HEK293 (cell line): ENCODE measurements at regions of chr2 and their contacts with region 1.

Region 1: DNA sequence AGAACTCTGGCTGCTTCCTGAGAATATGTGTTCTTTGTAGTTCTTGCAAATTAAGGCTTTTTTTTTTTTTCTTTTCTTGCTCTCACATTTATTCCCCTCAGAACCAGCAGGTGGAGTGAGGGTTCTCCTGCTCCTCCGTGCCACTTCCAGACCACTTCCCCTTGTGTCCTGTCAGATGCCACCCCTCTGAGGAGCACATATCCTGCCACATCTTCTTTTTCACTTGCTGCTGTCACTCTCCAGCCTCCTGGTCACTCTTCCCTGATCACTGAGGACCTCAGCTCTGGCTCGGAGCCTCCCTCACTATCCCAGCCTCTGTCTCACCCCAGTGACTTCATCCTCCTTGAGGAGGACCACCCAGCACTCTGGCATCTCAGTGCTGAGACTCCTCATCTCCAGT is 100.5 kb downstream of the TACR1 start:
- H3K4me3 ChIP-seq: no peak overlapping the region
- H3K27ac ChIP-seq: no peak overlapping the region
- H3K4me1 ChIP-seq: peaks cover 5% of the 10 kb centered on the region
- CTCF ChIP-seq: peak; percentile 38; the same call in 1 of the 2 replicates

Region 2: DNA sequence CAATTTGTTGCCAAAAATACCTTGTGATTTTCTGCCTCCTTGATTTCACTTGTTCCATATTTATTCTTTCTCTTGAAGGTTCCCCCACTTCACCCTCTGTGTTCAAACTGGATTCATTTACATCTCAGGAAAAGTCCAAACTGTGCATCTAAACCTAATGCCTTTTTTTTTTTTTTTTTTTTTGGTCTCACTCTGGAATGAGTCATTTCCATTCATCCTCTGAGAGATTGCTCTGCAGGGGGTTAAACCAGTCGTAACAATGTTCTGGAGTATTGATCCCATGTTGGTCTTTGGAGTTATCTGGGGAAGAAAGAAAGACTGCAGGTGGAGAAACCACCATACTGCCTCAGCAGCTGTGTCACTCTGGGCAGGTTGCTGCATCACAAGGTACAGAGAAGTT is 19.3 kb before region 1 on chr2:
- CTCF ChIA-PET with region 1: no interaction called
- POLR2A ChIA-PET with region 1: no interaction called
- H3K4me3 ChIP-seq: no peak overlapping the region
- H3K27ac ChIP-seq: no peak overlapping the region
- H3K4me1 ChIP-seq: peaks cover 2% of the 10 kb centered on the region; the same call in 1 of the 2 replicates
- CTCF ChIP-seq: no peak

Region 3: DNA sequence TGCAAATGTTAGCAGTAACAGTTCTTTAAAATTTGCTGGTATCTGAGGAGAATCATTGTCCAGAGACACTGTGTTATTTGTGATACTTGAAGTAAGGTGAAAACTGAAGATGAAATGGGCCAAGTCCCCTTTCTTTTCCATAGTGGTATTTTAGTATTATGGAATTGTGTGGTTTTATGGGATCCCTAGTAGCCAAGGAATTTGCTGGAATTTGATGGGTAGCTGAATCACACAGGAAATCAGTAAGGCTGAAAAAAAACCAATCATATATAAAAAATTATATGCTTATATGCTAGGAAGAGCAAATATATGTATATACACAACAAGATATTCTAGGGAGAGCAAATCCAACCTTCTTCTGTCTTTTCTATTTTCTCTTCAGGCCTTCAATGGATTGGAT is 154.7 kb after region 1 on chr2:
- CTCF ChIA-PET with region 1: no interaction called
- POLR2A ChIA-PET with region 1: no interaction called
- H3K4me3 ChIP-seq: no peak overlapping the region
- H3K27ac ChIP-seq: no peak overlapping the region
- H3K4me1 ChIP-seq: no peaks in the 10 kb centered on the region
- CTCF ChIP-seq: no peak

Region 4: GRCh38 chr2:75292826-75293225 is 194.0 kb after region 1 on chr2:
- CTCF ChIA-PET with region 1: interaction called, 10 read pairs
- POLR2A ChIA-PET with region 1: no interaction called
- H3K4me3 ChIP-seq: no peak overlapping the region
- H3K27ac ChIP-seq: no peak overlapping the region
- H3K4me1 ChIP-seq: no peaks in the 10 kb centered on the region
- CTCF ChIP-seq: no peak